HCT116 (cell line): ENCODE measurements at regions of chr10 and their contacts with region 1.

Region 1: DNA sequence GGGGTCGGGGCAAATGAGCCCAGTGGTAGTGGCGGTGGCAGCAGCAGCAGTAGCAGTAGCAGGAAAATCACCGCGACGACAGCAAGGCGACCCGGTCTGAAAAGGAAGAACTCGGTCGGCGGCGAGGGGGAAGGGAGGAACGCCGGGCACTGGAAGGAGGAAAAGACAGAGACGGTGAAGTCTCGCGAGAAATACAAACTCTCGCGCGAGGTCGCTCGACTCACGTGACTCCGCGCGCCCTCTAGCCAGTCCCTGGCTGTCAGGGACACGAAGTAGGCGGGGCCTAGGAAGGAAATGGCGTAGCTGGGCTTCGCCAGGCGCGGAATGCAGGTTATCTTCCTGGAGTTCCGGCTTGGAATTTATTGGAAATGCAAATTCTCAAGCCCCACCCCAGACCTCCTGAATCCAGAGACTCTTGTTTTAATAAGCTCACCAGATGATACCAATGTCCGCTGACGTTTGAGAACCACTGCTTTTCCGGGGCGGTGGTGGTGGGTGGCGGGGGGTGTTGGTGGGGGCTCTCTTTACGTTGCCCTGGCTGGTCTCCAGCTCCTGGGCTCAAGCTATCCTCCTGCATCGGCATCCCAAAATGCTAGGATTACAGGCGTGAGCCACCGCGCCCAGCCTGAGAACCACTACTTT is at the start of gene SMNDC1:
- DNase-seq: peak; percentile 99
- ATAC-seq: peak; percentile 94
- H3K4me3 ChIP-seq: peak within 1 kb of the TSS; percentile 88 to 91
- H3K27ac ChIP-seq: peak within 1 kb of the TSS; percentile 77
- H3K4me1 ChIP-seq: peaks cover 12 to 26% of the 10 kb centered on the region in 2 experiments; a peak in 3 of 4 replicates
- H3K27me3 ChIP-seq: no peaks in the 10 kb centered on the region
- CTCF ChIP-seq: no peak
- POLR2A ChIP-seq: peak; percentile 77
- RAD21 ChIP-seq: no peak
- total RNA-seq, gene SMNDC1: 61.7 TPM

Region 2: DNA sequence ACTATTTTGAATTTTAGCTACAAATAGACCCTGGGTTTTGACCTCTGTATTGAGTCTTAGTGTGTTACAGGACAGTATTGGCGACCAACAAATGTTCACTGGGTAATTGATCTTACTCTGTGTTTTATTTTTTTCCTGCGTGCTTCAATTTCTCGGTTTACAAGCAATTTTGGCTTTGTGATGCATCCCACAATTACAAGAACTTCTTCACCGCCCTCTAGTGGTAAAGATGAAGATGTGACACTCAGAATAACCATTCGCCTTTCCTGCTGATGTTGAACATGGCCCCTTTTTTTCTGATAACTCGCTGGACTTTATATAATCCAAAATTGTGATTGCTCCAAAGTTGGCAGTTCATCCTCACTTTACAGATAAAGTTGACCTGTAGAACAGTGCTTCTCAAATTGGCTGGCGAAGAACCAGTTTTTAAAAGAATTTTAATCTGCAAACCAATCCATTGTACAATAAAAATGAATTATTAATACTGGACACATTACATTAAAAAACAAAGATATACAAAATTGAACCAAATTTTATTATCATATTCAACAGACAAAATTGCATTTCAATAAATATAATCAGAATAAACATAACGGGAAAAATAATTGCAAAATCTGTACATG is 242.3 kb after region 1 on chr10:
- CTCF ChIA-PET with region 1: interaction called, 19 read pairs
- POLR2A ChIA-PET with region 1: interaction called, 7 read pairs
- RAD21 ChIA-PET with region 1: interaction called in 1 of 2 experiments, 5 read pairs
- intact Hi-C with region 1: loop called (anchors 1 kb)
- DNase-seq: peak; percentile 66
- ATAC-seq: peak; percentile 85
- H3K4me3 ChIP-seq: no peak overlapping the region
- H3K27ac ChIP-seq: no peak overlapping the region
- H3K4me1 ChIP-seq: peaks cover 0 to 7% of the 10 kb centered on the region in 2 experiments; a peak in 2 of 4 replicates
- H3K27me3 ChIP-seq: no peaks in the 10 kb centered on the region
- CTCF ChIP-seq: peak; percentile 82 to 98 (median 91)
- POLR2A ChIP-seq: no peak
- RAD21 ChIP-seq: peak; percentile 98

Region 3: DNA sequence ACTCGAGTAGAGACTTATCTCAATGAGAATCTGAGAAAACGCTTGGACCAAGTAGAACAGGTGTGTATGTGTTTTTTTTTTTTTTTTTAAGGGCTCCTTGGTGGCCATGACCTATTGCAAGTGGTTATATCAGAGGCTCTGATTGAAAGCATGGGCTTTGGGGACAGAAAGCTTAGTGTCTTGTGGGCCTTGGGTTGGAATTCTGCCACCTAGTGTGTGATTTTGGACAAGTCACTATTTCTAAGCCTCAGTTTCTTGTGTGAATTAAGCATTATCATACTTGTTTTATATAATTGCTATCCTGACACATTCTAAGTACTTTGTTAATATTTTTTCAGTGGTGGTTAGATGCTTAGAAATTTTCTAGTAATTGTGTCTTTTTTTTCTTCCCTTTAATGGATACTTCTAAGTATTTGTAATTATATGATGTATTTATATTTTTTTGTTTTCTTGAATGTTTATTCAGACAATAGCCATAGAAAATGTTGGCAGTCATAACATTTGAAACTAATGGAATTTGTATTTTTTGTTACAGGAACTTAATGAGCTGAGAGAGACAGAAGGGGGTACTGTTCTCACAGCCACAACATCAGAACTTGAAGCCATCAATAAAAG is 295.7 kb after region 1 on chr10:
- CTCF ChIA-PET with region 1: interaction called, 47 read pairs
- POLR2A ChIA-PET with region 1: interaction called, 3 read pairs
- RAD21 ChIA-PET with region 1: interaction called, 3 to 6 read pairs
- intact Hi-C with region 1: loop called (anchors 1 kb)
- DNase-seq: peak; percentile 87
- ATAC-seq: peak; percentile 98
- H3K4me3 ChIP-seq: no peak overlapping the region
- H3K27ac ChIP-seq: no peak overlapping the region
- H3K4me1 ChIP-seq: no peaks in the 10 kb centered on the region
- H3K27me3 ChIP-seq: no peaks in the 10 kb centered on the region
- CTCF ChIP-seq: peak; percentile 73 to 86 (median 85)
- POLR2A ChIP-seq: no peak
- RAD21 ChIP-seq: peak; percentile 74

Region 4: GRCh38 chr10:110671788-110672579 is 367.1 kb after region 1 on chr10:
- CTCF ChIA-PET with region 1: interaction called, 4 read pairs
- POLR2A ChIA-PET with region 1: no interaction called
- RAD21 ChIA-PET with region 1: no interaction called
- intact Hi-C with region 1: loop called (anchors 1 kb)
- DNase-seq: peak; percentile 78
- ATAC-seq: peak; percentile 97
- H3K4me3 ChIP-seq: peak overlapping the region; percentile 66 to 68
- H3K27ac ChIP-seq: peak overlapping the region; percentile 32
- H3K4me1 ChIP-seq: peaks cover 3 to 18% of the 10 kb centered on the region in 2 experiments; a peak in 2 of 4 replicates
- H3K27me3 ChIP-seq: no peaks in the 10 kb centered on the region
- CTCF ChIP-seq: peak; percentile 89 to 97 (median 90)
- POLR2A ChIP-seq: peak; percentile 32
- RAD21 ChIP-seq: peak; percentile 85